CD4-positive, alpha-beta memory T cell (primary cell): ENCODE measurements at regions of chr1 and their contacts with region 1.

Region 1: DNA sequence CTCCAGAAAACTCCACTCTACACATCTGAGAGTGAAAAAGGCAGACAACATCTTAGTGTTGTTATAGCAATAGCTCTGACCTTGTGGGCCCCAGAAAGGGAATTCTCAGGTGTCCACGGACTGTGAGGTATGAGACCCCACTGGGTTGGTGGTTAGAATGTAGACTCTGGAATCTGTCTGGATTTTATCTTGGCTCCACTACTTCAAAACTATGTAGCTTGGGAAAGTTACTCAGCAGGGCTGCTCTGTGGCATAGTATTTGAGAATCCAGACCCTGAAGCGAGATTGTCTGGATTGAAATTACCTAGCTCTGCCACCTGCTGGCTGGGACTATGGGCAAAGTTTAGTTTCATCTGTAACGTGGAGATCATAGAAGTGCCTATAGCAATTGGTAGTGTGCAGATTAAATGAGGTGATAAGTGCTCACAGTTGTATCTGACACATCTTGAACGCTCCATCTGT is 25.8 kb downstream of the PRDM2 start:
- DNase-seq: peak; percentile 56 to 69 (median 60)
- H3K4me3 ChIP-seq: no peak overlapping the region
- H3K4me3 Mint-ChIP-seq: no peak overlapping the region
- H3K27ac ChIP-seq: peak overlapping the region; percentile 18
- H3K27ac Mint-ChIP-seq: peak overlapping the region; percentile 26 to 82 (median 66)
- H3K4me1 ChIP-seq: peaks cover 23% of the 10 kb centered on the region
- H3K4me1 Mint-ChIP-seq: peaks cover 34 to 72% (median 43%) of the 10 kb centered on the region in 4 donors
- H3K27me3 ChIP-seq: no peaks in the 10 kb centered on the region
- H3K27me3 Mint-ChIP-seq: no peaks in the 10 kb centered on the region

Region 2: DNA sequence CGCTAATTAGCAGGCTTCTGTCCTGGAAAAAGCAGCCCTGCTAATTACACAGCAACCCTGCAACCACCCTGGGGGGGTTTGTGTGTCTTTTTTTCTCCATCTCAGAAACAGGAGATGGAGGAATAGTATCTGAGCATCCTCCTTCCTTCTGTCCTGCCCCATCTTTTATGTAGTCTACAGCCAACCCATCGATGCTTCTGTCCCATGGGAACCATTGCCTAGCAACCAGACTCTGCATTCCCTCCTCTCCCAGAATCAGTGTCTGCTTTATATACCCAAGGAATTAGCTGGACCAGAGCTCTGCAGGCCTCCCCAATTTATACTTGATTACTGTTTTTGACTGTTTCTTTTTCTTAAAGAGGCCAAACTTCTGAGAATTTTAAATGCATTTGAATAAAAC is 247.1 kb before region 1 on chr1:
- CTCF ChIA-PET with region 1: no interaction called
- POLR2A ChIA-PET with region 1: no interaction called
- intact Hi-C with region 1: no loop called
- DNase-seq: no peak
- H3K4me3 ChIP-seq: no peak overlapping the region
- H3K4me3 Mint-ChIP-seq: no peak overlapping the region
- H3K27ac ChIP-seq: no peak overlapping the region
- H3K27ac Mint-ChIP-seq: no peak overlapping the region
- H3K4me1 ChIP-seq: no peaks in the 10 kb centered on the region
- H3K4me1 Mint-ChIP-seq: peaks cover 0 to 6% (median 2%) of the 10 kb centered on the region in 4 donors
- H3K27me3 ChIP-seq: no peaks in the 10 kb centered on the region
- H3K27me3 Mint-ChIP-seq: peaks cover 5 to 6% of the 10 kb centered on the region in 2 donors

Region 3: DNA sequence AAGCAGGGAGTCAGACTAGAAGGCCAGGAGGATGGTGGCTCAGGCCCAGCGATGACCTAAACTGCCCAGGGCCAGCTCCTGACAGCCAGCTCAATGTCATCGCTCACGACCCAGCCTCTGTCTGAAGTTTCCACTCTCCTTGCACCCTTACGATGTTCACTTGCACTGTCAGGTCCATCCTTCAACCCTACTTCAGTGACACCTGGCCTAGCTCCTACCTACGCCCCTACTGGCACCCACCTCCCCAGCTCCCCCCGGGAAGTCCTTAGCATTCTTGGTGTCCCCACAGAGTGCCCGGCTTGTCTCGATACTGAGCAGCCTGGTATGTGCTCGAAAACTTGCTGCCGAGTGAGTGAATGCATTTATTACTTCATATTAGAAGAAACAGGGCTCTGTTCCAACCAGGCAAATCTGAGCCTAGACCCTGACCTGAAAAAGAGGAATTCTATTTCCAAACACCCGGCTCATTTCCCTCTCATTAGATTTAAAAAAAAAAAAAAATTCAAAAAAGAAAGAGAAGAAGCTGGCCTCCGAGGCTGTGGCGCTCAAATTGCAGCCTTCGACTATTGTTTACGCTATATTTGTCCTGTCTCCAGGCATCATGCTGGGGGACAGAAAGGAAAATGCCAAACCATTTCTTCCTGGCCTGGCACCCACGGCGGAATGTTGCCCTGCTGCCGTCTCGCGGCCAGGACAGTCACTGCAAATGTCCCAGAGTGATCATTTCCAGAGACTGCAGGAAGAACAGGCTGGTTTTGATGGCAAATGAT is 182.1 kb before region 1 on chr1:
- CTCF ChIA-PET with region 1: no interaction called
- POLR2A ChIA-PET with region 1: no interaction called
- intact Hi-C with region 1: no loop called
- DNase-seq: no peak
- H3K4me3 ChIP-seq: no peak overlapping the region
- H3K4me3 Mint-ChIP-seq: no peak overlapping the region
- H3K27ac ChIP-seq: no peak overlapping the region
- H3K27ac Mint-ChIP-seq: peak overlapping the region in 1 of 7 donors; percentile 66
- H3K4me1 ChIP-seq: no peaks in the 10 kb centered on the region
- H3K4me1 Mint-ChIP-seq: no peaks in the 10 kb centered on the region
- H3K27me3 ChIP-seq: no peaks in the 10 kb centered on the region
- H3K27me3 Mint-ChIP-seq: peaks cover 6 to 11% of the 10 kb centered on the region in 2 donors

Region 4: DNA sequence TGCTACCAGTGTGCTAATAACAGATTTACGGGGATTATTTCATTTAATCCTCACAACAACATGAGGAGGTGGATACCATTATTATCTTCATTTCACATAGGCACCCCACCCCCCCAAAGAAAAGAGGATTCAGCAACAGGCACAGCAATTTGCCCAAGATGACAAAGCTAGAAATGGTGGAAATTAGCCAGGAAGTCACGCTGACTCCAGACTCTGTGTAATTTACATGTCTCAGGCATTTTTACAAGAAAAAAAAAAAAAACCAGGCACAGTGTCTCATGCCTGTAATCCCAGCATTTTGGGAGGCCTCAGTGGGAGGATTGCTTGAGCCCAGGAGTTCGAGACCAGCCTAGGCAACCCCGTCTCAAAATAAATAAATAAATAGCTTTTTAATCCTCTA is 63.3 kb before region 1 on chr1:
- CTCF ChIA-PET with region 1: interaction called, 39 read pairs
- POLR2A ChIA-PET with region 1: interaction called, 3 read pairs
- intact Hi-C with region 1: loop called (anchors 1 kb)
- DNase-seq: no peak
- H3K4me3 ChIP-seq: no peak overlapping the region
- H3K4me3 Mint-ChIP-seq: no peak overlapping the region
- H3K27ac ChIP-seq: no peak overlapping the region
- H3K27ac Mint-ChIP-seq: no peak overlapping the region
- H3K4me1 ChIP-seq: no peaks in the 10 kb centered on the region
- H3K4me1 Mint-ChIP-seq: peaks cover 2 to 8% (median 4%) of the 10 kb centered on the region in 4 donors
- H3K27me3 ChIP-seq: no peaks in the 10 kb centered on the region
- H3K27me3 Mint-ChIP-seq: peaks cover 2 to 5% of the 10 kb centered on the region in 2 donors

Region 5: GRCh38 chr1:13674377-13674776 is 51.4 kb before region 1 on chr1:
- CTCF ChIA-PET with region 1: interaction called, 10 read pairs
- POLR2A ChIA-PET with region 1: interaction called, 3 read pairs
- intact Hi-C with region 1: no loop called
- DNase-seq: no peak
- H3K4me3 ChIP-seq: no peak overlapping the region
- H3K4me3 Mint-ChIP-seq: no peak overlapping the region
- H3K27ac ChIP-seq: no peak overlapping the region
- H3K27ac Mint-ChIP-seq: no peak overlapping the region
- H3K4me1 ChIP-seq: no peaks in the 10 kb centered on the region
- H3K4me1 Mint-ChIP-seq: no peaks in the 10 kb centered on the region
- H3K27me3 ChIP-seq: no peaks in the 10 kb centered on the region
- H3K27me3 Mint-ChIP-seq: peaks cover 13 to 19% of the 10 kb centered on the region in 2 donors

Region 6: GRCh38 chr1:13699936-13700520 is 25.7 kb before region 1 on chr1 and contains the start of gene PRDM2:
- CTCF ChIA-PET with region 1: interaction called, 21 read pairs
- POLR2A ChIA-PET with region 1: interaction called, 31 read pairs
- intact Hi-C with region 1: no loop called
- DNase-seq: peak; percentile 55 to 78 (median 74)
- H3K4me3 ChIP-seq: peak within 1 kb of the TSS; percentile 87 to 90
- H3K4me3 Mint-ChIP-seq: peak within 1 kb of the TSS; percentile 95 to 99 (median 98)
- H3K27ac ChIP-seq: peak within 1 kb of the TSS; percentile 92
- H3K27ac Mint-ChIP-seq: peak within 1 kb of the TSS; percentile 98 to 100 (median 100)
- H3K4me1 ChIP-seq: peaks cover 44% of the 10 kb centered on the region
- H3K4me1 Mint-ChIP-seq: peaks cover 37 to 60% (median 43%) of the 10 kb centered on the region in 4 donors
- H3K27me3 ChIP-seq: no peaks in the 10 kb centered on the region
- H3K27me3 Mint-ChIP-seq: peaks cover 0 to 4% of the 10 kb centered on the region in 2 donors
- total RNA-seq, gene PRDM2: 113 to 118 TPM

Region 7: DNA sequence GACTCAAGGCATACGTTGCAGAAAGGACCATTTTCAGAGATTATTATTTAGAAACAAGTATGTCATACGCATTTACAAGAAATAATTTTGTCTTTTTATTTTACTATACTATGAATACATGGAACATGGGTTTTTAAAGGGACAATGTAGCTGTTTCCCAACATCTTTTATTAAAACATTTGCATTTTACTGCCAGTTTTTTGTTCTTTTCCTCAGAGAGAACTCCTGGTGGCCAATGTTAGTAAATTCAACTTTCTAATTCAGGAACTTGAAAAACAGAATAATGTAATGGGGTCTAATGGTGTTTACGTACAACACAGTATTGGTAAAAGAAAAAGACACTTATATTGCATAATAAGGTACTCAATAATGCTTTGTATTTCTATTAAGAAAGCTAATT is 10.9 kb before region 1 on chr1:
- CTCF ChIA-PET with region 1: interaction called, 23 read pairs
- POLR2A ChIA-PET with region 1: interaction called, 5 read pairs
- intact Hi-C with region 1: no loop called
- DNase-seq: no peak
- H3K4me3 ChIP-seq: no peak overlapping the region
- H3K4me3 Mint-ChIP-seq: no peak overlapping the region
- H3K27ac ChIP-seq: no peak overlapping the region
- H3K27ac Mint-ChIP-seq: no peak overlapping the region
- H3K4me1 ChIP-seq: no peaks in the 10 kb centered on the region
- H3K4me1 Mint-ChIP-seq: peaks cover 21 to 46% (median 36%) of the 10 kb centered on the region in 4 donors
- H3K27me3 ChIP-seq: no peaks in the 10 kb centered on the region
- H3K27me3 Mint-ChIP-seq: no peaks in the 10 kb centered on the region

Region 8: DNA sequence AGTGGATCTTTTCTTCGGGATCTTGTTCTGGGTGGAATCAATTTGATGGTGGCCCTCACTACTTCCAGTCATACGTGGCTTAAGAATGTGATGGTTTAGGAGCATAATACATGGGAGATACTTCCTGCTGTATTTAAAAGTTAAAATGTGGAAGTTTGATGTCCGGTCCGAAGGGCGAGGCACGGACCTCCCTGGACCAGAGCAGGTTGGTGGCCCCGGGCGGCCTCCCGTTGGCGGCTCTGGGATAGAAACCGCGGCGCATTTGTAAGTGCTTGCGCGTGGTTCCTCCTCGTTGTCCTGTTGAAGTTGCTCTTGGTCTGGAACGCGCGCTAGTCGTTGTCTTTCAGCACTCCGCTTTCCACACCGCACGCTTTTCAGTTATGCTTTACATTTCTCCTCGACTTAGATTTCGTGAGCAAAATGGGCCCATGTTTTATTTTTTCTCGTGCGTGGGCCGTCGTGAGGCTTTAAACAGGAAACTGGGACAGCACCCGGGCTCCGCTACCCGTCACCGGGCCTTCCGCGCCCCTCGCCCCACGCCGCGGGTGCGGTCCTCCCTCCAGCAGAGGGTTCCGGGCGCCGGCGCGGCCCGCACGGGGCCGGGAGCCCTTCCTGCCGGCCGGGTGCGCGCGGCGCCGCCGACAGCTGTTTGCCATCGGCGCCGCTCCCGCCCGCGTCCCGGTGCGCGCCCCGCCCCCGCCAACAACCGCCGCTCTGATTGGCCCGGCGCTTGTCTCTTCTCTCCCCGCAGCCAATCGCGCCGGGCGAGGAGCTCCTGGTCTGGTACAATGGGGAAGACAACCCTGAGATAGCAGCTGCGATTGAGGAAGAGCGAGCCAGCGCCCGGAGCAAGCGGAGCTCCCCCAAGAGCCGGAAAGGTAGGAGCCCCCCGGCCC is 23.1 kb after region 1 on chr1:
- CTCF ChIA-PET with region 1: interaction called, 16 read pairs
- POLR2A ChIA-PET with region 1: interaction called, 188 read pairs
- intact Hi-C with region 1: no loop called
- DNase-seq: peak; percentile 96 to 97 (median 96)
- H3K4me3 ChIP-seq: peak overlapping the region; percentile 61 to 77
- H3K4me3 Mint-ChIP-seq: peak overlapping the region; percentile 88 to 97 (median 92)
- H3K27ac ChIP-seq: peak overlapping the region; percentile 84
- H3K27ac Mint-ChIP-seq: peak overlapping the region; percentile 96 to 98 (median 98)
- H3K4me1 ChIP-seq: peaks cover 50% of the 10 kb centered on the region
- H3K4me1 Mint-ChIP-seq: peaks cover 37 to 64% (median 46%) of the 10 kb centered on the region in 4 donors
- H3K27me3 ChIP-seq: no peaks in the 10 kb centered on the region
- H3K27me3 Mint-ChIP-seq: no peaks in the 10 kb centered on the region

Region 9: DNA sequence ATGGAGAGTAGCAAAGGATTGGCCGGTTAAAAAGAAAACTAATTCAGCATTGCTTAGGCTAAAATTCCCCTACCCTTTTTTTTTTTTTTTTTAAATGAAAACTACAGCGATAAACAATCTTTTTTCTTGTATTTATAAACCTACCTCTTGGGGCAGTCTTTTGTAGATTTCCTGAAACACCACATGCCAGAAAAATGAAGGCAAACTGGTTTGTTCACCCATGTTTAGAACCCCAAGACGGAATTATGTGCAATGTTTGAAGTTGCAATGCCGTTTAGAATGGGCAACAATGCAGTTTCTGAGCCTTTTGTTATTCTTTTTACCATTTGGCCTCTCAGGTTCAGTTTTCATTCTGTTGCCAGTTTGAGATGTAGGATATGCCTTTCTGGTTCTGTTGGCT is 33.3 kb after region 1 on chr1:
- CTCF ChIA-PET with region 1: interaction called, 18 read pairs
- POLR2A ChIA-PET with region 1: interaction called, 6 read pairs
- intact Hi-C with region 1: no loop called
- DNase-seq: peak in 2 of 5 donors; percentile 11 to 24
- H3K4me3 ChIP-seq: no peak overlapping the region
- H3K4me3 Mint-ChIP-seq: peak overlapping the region in 5 of 8 donors; percentile 29 to 55 (median 51)
- H3K27ac ChIP-seq: no peak overlapping the region
- H3K27ac Mint-ChIP-seq: peak overlapping the region in 4 of 7 donors; percentile 25 to 66 (median 51)
- H3K4me1 ChIP-seq: peaks cover 96% of the 10 kb centered on the region
- H3K4me1 Mint-ChIP-seq: peaks cover 70 to 97% (median 82%) of the 10 kb centered on the region in 4 donors
- H3K27me3 ChIP-seq: no peaks in the 10 kb centered on the region
- H3K27me3 Mint-ChIP-seq: no peaks in the 10 kb centered on the region